PC-3 (cell line): ENCODE measurements at regions of chr9 and their contacts with region 1.

Region 1: GRCh38 chr9:128243215-128244018 is 32.4 kb downstream of the GOLGA2 start:
- DNase-seq: no peak
- ATAC-seq: no peak
- H3K4me3 ChIP-seq: no peak overlapping the region
- H3K27ac ChIP-seq: no peak overlapping the region
- H3K4me1 ChIP-seq: no peaks in the 10 kb centered on the region
- H3K27me3 ChIP-seq: no peaks in the 10 kb centered on the region
- CTCF ChIP-seq: no peak

Region 2: DNA sequence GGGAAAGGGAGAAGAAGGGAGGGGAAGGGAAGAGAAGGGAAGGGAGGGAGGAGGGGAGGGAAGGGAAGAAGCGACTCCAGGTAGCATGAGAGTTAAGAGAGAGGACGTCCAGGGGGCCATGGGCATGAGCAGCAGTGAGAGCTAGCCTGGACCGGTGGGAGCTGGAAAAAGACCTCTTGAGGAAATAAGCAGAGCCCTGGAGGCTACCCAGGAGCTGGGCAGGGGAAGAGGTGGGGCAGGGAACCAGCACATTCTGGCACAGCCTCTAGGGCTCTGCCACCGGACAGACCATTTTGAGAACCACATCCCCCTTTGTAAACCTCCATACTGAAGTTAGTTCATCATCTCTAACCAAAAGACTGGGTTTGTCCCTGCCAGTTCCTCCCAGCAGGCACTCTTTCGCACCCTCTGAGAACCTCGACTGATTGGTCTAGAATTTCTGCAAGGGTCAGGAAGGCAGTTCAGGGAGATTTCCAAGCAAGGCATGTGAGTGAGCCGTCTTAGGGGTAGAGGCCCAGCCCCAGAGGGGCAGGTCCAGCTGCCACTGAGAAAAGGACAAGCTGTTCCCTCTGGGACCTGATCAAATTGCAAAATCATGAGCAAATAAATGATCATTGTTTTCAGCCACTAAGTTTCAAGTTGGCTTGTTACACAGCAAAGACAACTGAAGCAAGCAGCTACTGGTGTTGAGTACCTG is 187.9 kb before region 1 on chr9:
- CTCF ChIA-PET with region 1: no interaction called
- POLR2A ChIA-PET with region 1: no interaction called
- intact Hi-C with region 1: no loop called
- DNase-seq: no peak
- ATAC-seq: no peak
- H3K4me3 ChIP-seq: no peak overlapping the region
- H3K27ac ChIP-seq: no peak overlapping the region
- H3K4me1 ChIP-seq: peaks cover 33% of the 10 kb centered on the region
- H3K27me3 ChIP-seq: no peaks in the 10 kb centered on the region
- CTCF ChIP-seq: no peak

Region 3: GRCh38 chr9:128175102-128175563 is 68.3 kb before region 1 on chr9:
- CTCF ChIA-PET with region 1: no interaction called
- POLR2A ChIA-PET with region 1: no interaction called
- intact Hi-C with region 1: no loop called
- DNase-seq: no peak
- ATAC-seq: no peak
- H3K4me3 ChIP-seq: no peak overlapping the region
- H3K27ac ChIP-seq: no peak overlapping the region
- H3K4me1 ChIP-seq: no peaks in the 10 kb centered on the region
- H3K27me3 ChIP-seq: no peaks in the 10 kb centered on the region
- CTCF ChIP-seq: no peak

Region 4: GRCh38 chr9:128185979-128186965 is 57.1 kb before region 1 on chr9:
- CTCF ChIA-PET with region 1: no interaction called
- POLR2A ChIA-PET with region 1: interaction called, 11 read pairs
- intact Hi-C with region 1: no loop called
- DNase-seq: no peak
- ATAC-seq: no peak
- H3K4me3 ChIP-seq: no peak overlapping the region
- H3K27ac ChIP-seq: no peak overlapping the region
- H3K4me1 ChIP-seq: no peaks in the 10 kb centered on the region; the same call in 1 of the 2 replicates
- H3K27me3 ChIP-seq: no peaks in the 10 kb centered on the region
- CTCF ChIP-seq: no peak